ENCODE measurements at regions of chr1 and their contacts with region 1.

Region 1: DNA sequence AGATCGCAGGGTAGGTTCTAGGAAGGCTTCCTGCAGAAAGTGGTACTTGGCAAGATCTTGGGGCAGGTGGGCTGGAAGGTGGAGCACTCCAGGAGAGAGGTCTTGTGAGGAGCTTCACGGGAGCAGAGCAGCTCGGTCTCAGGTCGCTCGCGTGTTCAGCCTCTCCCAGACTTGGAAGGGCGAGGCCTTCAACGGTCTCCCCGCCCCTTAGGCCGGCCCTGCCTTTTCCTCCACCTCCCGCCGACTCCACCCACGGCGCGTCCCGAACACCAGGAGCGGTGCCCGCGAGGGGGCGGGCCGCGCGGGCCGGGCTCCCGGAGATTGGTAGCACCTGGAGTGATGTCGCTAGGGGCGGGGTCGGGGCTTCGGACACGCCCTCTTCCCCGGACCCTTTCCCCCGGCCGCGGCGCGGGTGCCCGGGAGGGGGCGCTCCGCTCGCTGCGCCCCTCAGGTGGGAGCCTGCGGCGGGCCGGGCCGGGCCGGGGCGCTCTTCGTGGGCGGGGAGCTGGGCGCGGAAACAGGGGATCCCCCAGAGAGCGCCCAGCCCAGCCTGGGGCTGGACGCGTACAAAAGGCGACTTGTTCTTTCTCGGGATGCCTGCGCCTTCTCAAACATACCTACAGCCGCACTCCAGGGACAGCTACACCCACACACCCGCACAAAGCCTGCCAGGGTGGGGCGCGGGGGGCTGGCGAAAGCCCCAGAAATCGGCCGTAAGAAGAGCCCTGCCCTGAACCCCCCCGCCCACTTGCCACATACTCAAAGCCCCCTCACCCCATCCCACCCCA is 35.5 kb downstream of the AHDC1 start:
- DNase-seq: peak; percentile 96 to 98
- H3K4me3 ChIP-seq: peak overlapping the region; percentile 33 to 44
- H3K27ac ChIP-seq: peak overlapping the region; percentile 96
- H3K4me1 ChIP-seq: peaks cover 97% of the 10 kb centered on the region
- H3K27me3 ChIP-seq: no peaks in the 10 kb centered on the region
- CTCF ChIP-seq: peak; percentile 54 to 71 (median 60)
- POLR2A ChIP-seq: peak in 1 of 2 donors; percentile 66

Region 2: GRCh38 chr1:27525296-27526272 is 42.9 kb before region 1 on chr1:
- intact Hi-C with region 1: loop called (anchors 5 kb)
- DNase-seq: no peak
- H3K4me3 ChIP-seq: peak overlapping the region; percentile 32 to 44
- H3K27ac ChIP-seq: peak overlapping the region; percentile 99
- H3K4me1 ChIP-seq: peaks cover 96% of the 10 kb centered on the region
- H3K27me3 ChIP-seq: no peaks in the 10 kb centered on the region
- CTCF ChIP-seq: no peak
- POLR2A ChIP-seq: peak in 1 of 2 donors; percentile 6

Region 3: GRCh38 chr1:27603681-27604578 is 35.4 kb after region 1 on chr1 and contains the start of gene AHDC1:
- intact Hi-C with region 1: no loop called
- DNase-seq: no peak
- H3K4me3 ChIP-seq: peak within 1 kb of the TSS; percentile 66 to 79
- H3K27ac ChIP-seq: peak within 1 kb of the TSS; percentile 97
- H3K4me1 ChIP-seq: peaks cover 68% of the 10 kb centered on the region
- H3K27me3 ChIP-seq: no peaks in the 10 kb centered on the region
- CTCF ChIP-seq: peak in 1 of 3 experiments; percentile 19
- POLR2A ChIP-seq: peak in 1 of 2 donors; percentile 97
- total RNA-seq, gene AHDC1: 62.4 TPM

Measured in vagina (tissue), 2 donors.